Activated CD4-positive, alpha-beta T cell treated with anti-CD3 and anti-CD28 coated beads for 36 hours (primary cell): ENCODE measurements at regions of chr18 and their contacts with region 1.

Region 1: GRCh38 chr18:63518178-63519012 is 23.8 kb upstream of the SERPINB12 start:
- DNase-seq: peak; percentile 71
- ATAC-seq: peak; percentile 91
- H3K4me3 Mint-ChIP-seq: no peak overlapping the region
- H3K27ac Mint-ChIP-seq: no peak overlapping the region
- H3K4me1 Mint-ChIP-seq: peaks cover 4% of the 10 kb centered on the region
- H3K27me3 Mint-ChIP-seq: peaks cover 9% of the 10 kb centered on the region

Region 2: DNA sequence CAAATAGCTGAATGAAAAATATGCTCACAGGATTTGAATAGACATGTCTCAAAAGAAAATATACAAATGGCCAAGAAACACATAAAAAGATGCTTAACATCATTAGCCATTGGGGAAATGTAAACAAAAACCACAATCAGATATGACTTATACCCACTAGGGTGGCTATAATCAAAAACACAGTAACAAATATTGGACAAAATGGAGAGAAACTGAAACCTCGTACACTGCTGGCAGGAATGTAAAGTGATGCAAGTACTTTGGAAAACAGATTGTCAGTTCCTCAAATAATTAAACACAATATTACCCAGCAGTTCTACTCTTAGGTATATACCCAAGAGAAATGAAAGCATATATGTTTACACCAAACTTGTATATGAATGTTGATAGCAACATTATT is 590.1 kb before region 1 on chr18:
- CTCF ChIA-PET with region 1: no interaction called
- POLR2A ChIA-PET with region 1: no interaction called
- intact Hi-C with region 1: no loop called
- DNase-seq: no peak
- ATAC-seq: no peak
- H3K4me3 Mint-ChIP-seq: no peak overlapping the region
- H3K27ac Mint-ChIP-seq: no peak overlapping the region
- H3K4me1 Mint-ChIP-seq: no peaks in the 10 kb centered on the region
- H3K27me3 Mint-ChIP-seq: no peaks in the 10 kb centered on the region

Region 3: DNA sequence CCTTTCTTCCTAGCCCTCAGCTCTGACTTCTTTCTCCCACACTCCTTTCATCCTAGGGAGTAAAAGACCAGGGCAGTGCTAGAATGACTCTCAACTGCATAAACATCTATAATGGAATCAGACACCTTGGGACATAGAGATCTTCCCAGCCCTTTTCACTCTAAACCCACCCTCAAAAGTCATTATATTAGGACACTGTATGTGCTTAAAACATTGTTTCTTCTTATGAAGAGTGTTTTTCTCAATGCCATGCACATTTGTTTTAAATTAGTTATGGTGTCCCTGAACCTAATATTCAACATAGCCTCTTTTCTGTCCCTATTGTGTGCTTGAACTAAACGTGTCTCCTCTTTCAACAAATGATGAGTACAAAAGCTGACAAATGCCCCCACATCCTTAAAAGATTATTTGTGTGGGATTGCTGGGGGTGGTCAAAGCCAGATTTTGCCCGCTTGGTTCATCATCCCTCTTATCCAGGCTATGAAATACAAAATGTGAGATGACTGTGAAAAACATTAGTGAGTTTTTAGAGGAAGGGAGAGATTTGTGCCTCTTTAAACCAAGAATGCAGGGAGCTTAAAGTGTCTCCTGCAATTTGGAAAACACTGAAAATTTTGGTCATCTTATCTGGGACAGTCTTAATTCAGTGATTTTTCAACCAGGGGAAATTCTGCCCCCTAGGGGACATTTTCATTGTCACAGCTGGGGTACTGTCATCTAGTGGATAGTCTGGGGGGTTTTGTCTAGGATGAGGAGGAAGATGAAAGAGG is 12.6 kb before region 1 on chr18:
- CTCF ChIA-PET with region 1: interaction called, 38 read pairs
- POLR2A ChIA-PET with region 1: no interaction called
- intact Hi-C with region 1: no loop called
- DNase-seq: peak; percentile 54
- ATAC-seq: no peak
- H3K4me3 Mint-ChIP-seq: no peak overlapping the region
- H3K27ac Mint-ChIP-seq: no peak overlapping the region
- H3K4me1 Mint-ChIP-seq: no peaks in the 10 kb centered on the region
- H3K27me3 Mint-ChIP-seq: peaks cover 28% of the 10 kb centered on the region

Region 4: GRCh38 chr18:63848159-63848558 is 329.8 kb after region 1 on chr18:
- CTCF ChIA-PET with region 1: interaction called, 24 read pairs
- POLR2A ChIA-PET with region 1: no interaction called
- intact Hi-C with region 1: loop called (anchors 1 kb)
- DNase-seq: no peak
- ATAC-seq: peak; percentile 39
- H3K4me3 Mint-ChIP-seq: no peak overlapping the region
- H3K27ac Mint-ChIP-seq: no peak overlapping the region
- H3K4me1 Mint-ChIP-seq: no peaks in the 10 kb centered on the region
- H3K27me3 Mint-ChIP-seq: peaks cover 15% of the 10 kb centered on the region

Region 5: DNA sequence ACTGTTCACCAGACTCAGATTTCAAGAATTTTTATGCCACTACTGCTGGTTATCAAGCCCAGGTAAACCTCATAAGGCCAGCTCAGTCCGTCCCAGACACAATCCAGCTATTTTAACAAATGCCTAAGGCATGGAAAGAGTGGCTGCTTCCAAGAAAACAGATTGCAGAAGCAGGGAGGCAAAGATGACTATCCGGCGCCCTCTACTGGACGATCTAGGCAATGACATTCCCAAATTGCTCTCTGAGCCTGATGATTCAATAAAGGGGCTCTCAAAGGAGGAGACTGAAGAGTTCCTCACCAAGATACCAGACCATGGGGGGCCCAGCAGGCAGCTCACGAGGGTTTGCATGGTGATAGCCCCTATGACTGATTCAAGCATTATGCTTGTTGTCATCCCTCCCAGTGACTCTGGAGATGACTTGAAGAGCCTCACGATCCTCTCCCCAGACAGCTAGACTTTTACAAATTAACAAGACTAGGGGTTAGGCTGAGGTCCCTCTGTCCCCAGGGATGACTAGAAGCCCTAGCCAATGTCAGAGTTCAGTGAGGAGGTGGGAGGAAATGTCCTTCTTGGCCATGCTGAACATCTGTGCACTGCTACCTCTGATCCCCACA is 476.5 kb after region 1 on chr18:
- CTCF ChIA-PET with region 1: interaction called, 9 read pairs
- POLR2A ChIA-PET with region 1: no interaction called
- intact Hi-C with region 1: loop called in 1 of 2 experiments (anchors 5 kb)
- DNase-seq: peak; percentile 56
- ATAC-seq: peak; percentile 23
- H3K4me3 Mint-ChIP-seq: no peak overlapping the region
- H3K27ac Mint-ChIP-seq: no peak overlapping the region
- H3K4me1 Mint-ChIP-seq: peaks cover 5% of the 10 kb centered on the region
- H3K27me3 Mint-ChIP-seq: no peaks in the 10 kb centered on the region